Naive thymus-derived CD4-positive, alpha-beta T cell (primary cell): ENCODE measurements at regions of chr14 and their contacts with region 1.

Region 1: GRCh38 chr14:23320774-23321571 is at the start of gene PABPN1:
- DNase-seq: peak; percentile 87 to 100 (median 99)
- ATAC-seq: peak; percentile 91
- H3K4me3 ChIP-seq: peak within 1 kb of the TSS; percentile 84
- H3K4me3 Mint-ChIP-seq: peak within 1 kb of the TSS; percentile 91 to 97 (median 93)
- H3K27ac ChIP-seq: peak within 1 kb of the TSS; percentile 96
- H3K27ac Mint-ChIP-seq: peak within 1 kb of the TSS; percentile 96 to 99 (median 98)
- H3K4me1 ChIP-seq: peaks cover 22% of the 10 kb centered on the region in 2 donors
- H3K4me1 Mint-ChIP-seq: peaks cover 22 to 38% (median 32%) of the 10 kb centered on the region in 7 donors
- H3K27me3 ChIP-seq: no peaks in the 10 kb centered on the region
- H3K27me3 Mint-ChIP-seq: peaks cover 0 to 3% (median 0%) of the 10 kb centered on the region in 5 donors
- total RNA-seq, gene PABPN1: 176 to 213 (median 196) TPM

Region 2: GRCh38 chr14:22589096-22589839 is 731.7 kb before region 1 on chr14 and contains the start of gene DAD1:
- CTCF ChIA-PET with region 1: no interaction called
- POLR2A ChIA-PET with region 1: no interaction called
- intact Hi-C with region 1: loop called in 1 of 2 experiments (anchors 1 kb)
- DNase-seq: peak; percentile 100
- ATAC-seq: peak; percentile 94
- H3K4me3 ChIP-seq: peak within 1 kb of the TSS; percentile 81
- H3K4me3 Mint-ChIP-seq: peak within 1 kb of the TSS; percentile 83 to 99 (median 96)
- H3K27ac ChIP-seq: peak within 1 kb of the TSS; percentile 96
- H3K27ac Mint-ChIP-seq: peak within 1 kb of the TSS; percentile 90 to 100 (median 99)
- H3K4me1 ChIP-seq: peaks cover 30 to 38% of the 10 kb centered on the region in 2 donors
- H3K4me1 Mint-ChIP-seq: peaks cover 34 to 62% (median 53%) of the 10 kb centered on the region in 7 donors
- H3K27me3 ChIP-seq: no peaks in the 10 kb centered on the region
- H3K27me3 Mint-ChIP-seq: peaks cover 0 to 17% (median 0%) of the 10 kb centered on the region in 5 donors
- total RNA-seq, gene DAD1: 68.8 to 157 (median 117) TPM

Region 3: GRCh38 chr14:23095196-23096108 is 225.5 kb before region 1 on chr14 and contains the start of gene C14orf119:
- CTCF ChIA-PET with region 1: interaction called, 3 read pairs
- POLR2A ChIA-PET with region 1: interaction called, 35 read pairs
- intact Hi-C with region 1: loop called (anchors 1 kb)
- DNase-seq: peak in 8 of 9 donors; percentile 88 to 100 (median 100)
- ATAC-seq: peak; percentile 93
- H3K4me3 ChIP-seq: peak within 1 kb of the TSS; percentile 88
- H3K4me3 Mint-ChIP-seq: no peak within 1 kb of the TSS
- H3K27ac ChIP-seq: peak within 1 kb of the TSS; percentile 97
- H3K27ac Mint-ChIP-seq: no peak within 1 kb of the TSS
- H3K4me1 ChIP-seq: peaks cover 26 to 32% of the 10 kb centered on the region in 2 donors
- H3K4me1 Mint-ChIP-seq: peaks cover 3 to 63% (median 33%) of the 10 kb centered on the region in 7 donors
- H3K27me3 ChIP-seq: no peaks in the 10 kb centered on the region
- H3K27me3 Mint-ChIP-seq: no peaks in the 10 kb centered on the region
- total RNA-seq, gene C14orf119: 6.0 to 49.9 (median 43.4) TPM

Region 4: GRCh38 chr14:23294734-23295561 is 26.0 kb before region 1 on chr14:
- CTCF ChIA-PET with region 1: interaction called, 41 read pairs
- POLR2A ChIA-PET with region 1: interaction called, 286 read pairs
- intact Hi-C with region 1: no loop called
- DNase-seq: peak; percentile 38 to 77 (median 66)
- ATAC-seq: peak; percentile 97
- H3K4me3 ChIP-seq: no peak overlapping the region
- H3K4me3 Mint-ChIP-seq: peak overlapping the region; percentile 3 to 87 (median 60)
- H3K27ac ChIP-seq: peak overlapping the region; percentile 51
- H3K27ac Mint-ChIP-seq: peak overlapping the region; percentile 35 to 96 (median 76)
- H3K4me1 ChIP-seq: peaks cover 0 to 11% of the 10 kb centered on the region in 2 donors
- H3K4me1 Mint-ChIP-seq: peaks cover 12 to 31% (median 28%) of the 10 kb centered on the region in 7 donors
- H3K27me3 ChIP-seq: no peaks in the 10 kb centered on the region
- H3K27me3 Mint-ChIP-seq: no peaks in the 10 kb centered on the region

Region 5: DNA sequence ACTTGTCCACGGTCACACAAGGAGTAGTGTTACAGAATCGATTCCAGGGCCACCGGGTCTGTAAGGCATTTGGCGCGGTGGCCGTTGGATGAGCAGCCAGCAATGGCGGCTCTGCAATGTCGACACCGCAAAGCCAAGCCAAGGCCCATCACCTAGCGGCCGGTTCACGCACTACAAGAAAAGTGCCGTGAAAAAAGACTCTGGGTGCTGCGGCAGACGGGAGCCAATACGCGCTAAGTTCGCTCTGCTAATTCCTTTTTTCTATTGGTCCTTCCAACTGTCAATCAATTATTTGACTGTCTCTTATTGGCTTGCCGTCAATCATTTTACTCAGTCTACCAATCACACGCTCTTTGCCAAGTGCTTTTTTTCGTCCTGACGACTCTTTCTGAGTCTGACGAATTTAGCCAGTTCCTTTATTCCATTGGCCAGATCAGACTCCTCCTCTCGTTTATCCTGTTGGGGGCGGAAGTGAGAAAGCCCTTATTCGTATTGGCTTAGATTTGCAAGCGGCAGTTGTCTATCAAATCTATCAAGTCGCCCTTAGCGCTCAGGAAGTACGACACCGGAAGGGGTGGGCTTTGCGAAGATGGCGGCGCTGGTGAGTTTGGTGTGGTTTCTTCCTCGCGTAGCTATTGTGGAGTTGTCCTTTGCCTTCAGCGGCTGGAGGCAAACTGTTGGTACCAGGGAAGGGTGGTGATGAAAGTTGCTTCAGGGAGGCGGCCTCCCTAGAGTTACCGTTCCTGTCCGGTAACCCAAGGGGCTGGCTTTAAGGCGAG is 148.3 kb after region 1 on chr14 and contains the start of gene NGDN:
- CTCF ChIA-PET with region 1: no interaction called
- POLR2A ChIA-PET with region 1: interaction called, 7 read pairs
- intact Hi-C with region 1: loop called (anchors 1 kb)
- DNase-seq: peak; percentile 76 to 99 (median 96)
- ATAC-seq: peak; percentile 94
- H3K4me3 ChIP-seq: peak within 1 kb of the TSS; percentile 73
- H3K4me3 Mint-ChIP-seq: peak within 1 kb of the TSS in 1 of 10 donors; percentile 77
- H3K27ac ChIP-seq: peak within 1 kb of the TSS; percentile 94
- H3K27ac Mint-ChIP-seq: peak within 1 kb of the TSS in 2 of 9 donors; percentile 26 to 68
- H3K4me1 ChIP-seq: peaks cover 6 to 11% of the 10 kb centered on the region in 2 donors
- H3K4me1 Mint-ChIP-seq: peaks cover 7 to 10% (median 7%) of the 10 kb centered on the region in 7 donors
- H3K27me3 ChIP-seq: no peaks in the 10 kb centered on the region
- H3K27me3 Mint-ChIP-seq: no peaks in the 10 kb centered on the region
- total RNA-seq, gene NGDN: 52.9 to 152 (median 74.0) TPM

Region 6: DNA sequence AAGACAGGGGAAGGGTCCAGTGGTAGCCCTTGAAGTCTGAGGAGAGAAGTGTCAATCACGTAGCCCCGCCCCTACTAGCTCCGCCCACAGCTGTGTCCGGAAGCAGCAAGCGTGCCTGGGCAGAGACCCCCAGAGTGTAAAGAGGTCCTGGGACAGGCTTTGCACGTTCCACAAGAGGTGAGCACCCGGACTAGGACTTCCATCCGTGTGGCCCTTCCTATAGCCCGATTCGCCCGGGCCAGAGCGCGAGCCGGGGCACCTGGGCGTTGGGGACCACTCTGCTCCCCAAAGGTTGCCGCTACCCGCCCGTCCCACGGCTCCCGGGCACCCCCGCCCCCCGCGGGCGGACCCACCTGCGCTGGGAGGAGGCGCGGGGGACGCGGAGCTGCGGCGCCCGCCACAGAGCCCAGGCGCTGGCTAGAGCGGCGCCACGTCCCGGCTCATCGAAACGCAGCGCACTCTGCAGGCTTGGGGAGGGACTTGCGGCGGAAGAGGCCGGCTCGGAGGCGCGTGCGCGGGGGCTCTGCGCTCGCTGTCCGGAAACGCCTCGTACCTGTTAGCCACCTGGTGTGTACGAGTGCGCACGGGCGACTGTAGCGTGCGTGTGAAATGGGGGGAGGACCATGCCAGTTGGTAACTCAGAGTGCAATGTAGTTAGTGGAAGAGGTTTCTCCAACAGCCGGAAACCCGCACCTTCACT is 950.3 kb after region 1 on chr14 and contains the start of gene RABGGTA:
- CTCF ChIA-PET with region 1: no interaction called
- POLR2A ChIA-PET with region 1: no interaction called
- intact Hi-C with region 1: loop called in 1 of 2 experiments (anchors 1 kb)
- DNase-seq: peak; percentile 87 to 97 (median 96)
- ATAC-seq: peak; percentile 91
- H3K4me3 ChIP-seq: peak within 1 kb of the TSS; percentile 80
- H3K4me3 Mint-ChIP-seq: peak within 1 kb of the TSS; percentile 79 to 95 (median 92)
- H3K27ac ChIP-seq: peak within 1 kb of the TSS; percentile 98
- H3K27ac Mint-ChIP-seq: peak within 1 kb of the TSS; percentile 93 to 100 (median 98)
- H3K4me1 ChIP-seq: peaks cover 17 to 23% of the 10 kb centered on the region in 2 donors
- H3K4me1 Mint-ChIP-seq: peaks cover 30 to 52% (median 46%) of the 10 kb centered on the region in 7 donors
- H3K27me3 ChIP-seq: no peaks in the 10 kb centered on the region
- H3K27me3 Mint-ChIP-seq: no peaks in the 10 kb centered on the region
- total RNA-seq, gene RABGGTA: 49.7 to 76.5 (median 55.5) TPM